ENCODE measurements at regions of chr6 and their contacts with region 1.

Region 1: DNA sequence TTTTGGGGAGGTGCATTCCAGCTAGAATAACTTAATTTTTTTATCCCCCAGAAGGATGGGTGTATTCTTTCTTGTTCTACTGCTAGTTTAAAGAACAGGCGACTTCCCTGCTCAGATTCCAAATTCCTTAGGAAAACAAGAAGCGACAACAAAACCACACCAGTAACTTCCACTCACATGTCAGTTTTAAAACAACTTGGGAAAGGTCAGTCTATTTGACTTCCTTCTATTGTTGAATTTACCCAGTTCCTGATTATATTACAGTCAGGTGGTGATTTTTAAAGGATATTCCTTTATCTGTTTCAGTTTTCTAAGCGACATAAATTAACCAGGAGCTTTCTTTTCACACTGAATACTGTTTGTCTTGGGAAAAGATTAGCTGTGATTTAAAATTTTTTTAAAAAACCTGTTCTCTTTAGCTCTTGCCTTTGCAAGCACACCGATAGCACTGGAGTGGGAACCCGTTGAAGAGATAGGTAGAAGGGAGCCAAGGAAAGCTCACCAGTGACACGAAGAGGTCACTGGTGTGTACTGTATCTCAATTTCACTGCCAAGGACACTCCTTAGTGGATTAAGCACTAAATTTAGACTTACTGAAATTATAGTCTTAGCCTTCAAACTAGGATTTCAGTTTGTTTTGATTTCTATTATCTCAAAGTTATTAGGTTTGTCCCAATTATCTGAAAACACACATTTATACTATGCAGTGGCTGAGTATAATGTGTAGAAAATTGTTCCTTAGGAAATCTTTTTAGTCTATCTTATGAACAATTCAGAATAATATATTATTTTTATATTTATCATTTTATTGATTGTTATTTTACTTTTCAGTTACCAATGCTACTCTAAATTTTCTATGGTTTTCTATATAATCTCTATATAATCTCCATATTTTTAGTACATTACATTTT is 22.3 kb downstream of the MARCKS start:
- DNase-seq: peak; percentile 50 to 58
- ATAC-seq: peak; percentile 100

Region 2: GRCh38 chr6:112780498-112781096 is 1098.8 kb before region 1 on chr6:
- intact Hi-C with region 1: loop called in 1 of 2 experiments (anchors 10 kb)
- DNase-seq: peak; percentile 38 to 72
- ATAC-seq: peak; percentile 86

Region 3: DNA sequence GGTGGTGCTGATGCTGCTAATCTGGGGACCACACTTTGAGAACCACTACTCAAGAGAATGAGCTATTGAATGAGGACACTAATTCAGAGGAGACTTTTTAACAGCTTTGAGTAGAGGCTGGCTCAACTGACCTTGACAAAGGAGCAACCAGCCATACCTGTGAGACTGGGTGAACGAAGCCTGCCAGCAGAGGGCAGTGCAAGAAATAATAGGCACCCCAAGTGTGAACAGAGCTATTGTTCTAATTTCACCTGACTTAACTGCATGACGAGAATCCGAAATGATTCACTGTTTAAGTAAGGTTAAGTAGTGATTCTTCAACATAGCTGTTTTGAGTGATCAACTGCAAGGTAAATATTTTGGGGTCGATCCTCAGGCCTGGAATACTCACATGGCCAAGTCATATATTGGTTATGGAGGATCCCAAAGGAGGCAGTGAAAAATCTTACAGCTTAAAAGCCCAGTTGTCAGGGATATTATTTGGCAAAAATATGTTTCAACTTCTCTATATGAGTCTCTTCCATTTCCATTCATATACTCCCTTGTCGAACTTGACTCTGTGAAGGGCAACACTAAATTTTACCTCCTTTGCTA is 572.8 kb before region 1 on chr6:
- intact Hi-C with region 1: loop called in 1 of 2 experiments (anchors 10 kb)
- DNase-seq: peak; percentile 57 to 79
- ATAC-seq: peak; percentile 74

Measured in left colon (tissue), 2 donors.